HepG2 (cell line): ENCODE measurements at regions of chr17 and their contacts with region 1.

Region 1: GRCh38 chr17:42536048-42536371 is at the start of gene NAGLU:
- DNase-seq: peak; percentile 89
- ATAC-seq: peak; percentile 74
- H3K4me3 ChIP-seq: peak within 1 kb of the TSS; percentile 54 to 72 (median 66)
- H3K27ac ChIP-seq: peak within 1 kb of the TSS; percentile 79
- H3K4me1 ChIP-seq: peaks cover 62% of the 10 kb centered on the region
- H3K27me3 ChIP-seq: no peaks in the 10 kb centered on the region
- CTCF ChIP-seq: no peak
- EP300 ChIP-seq: peak in 1 of 2 experiments; percentile 32; a peak in 1 of 4 replicates
- POLR2A ChIP-seq: peak; percentile 55 to 86
- RAD21 ChIP-seq: no peak
- total RNA-seq, gene NAGLU: 13.1 and 40.1 TPM in 2 replicates

Region 2: GRCh38 chr17:42312285-42313130 is 223.5 kb before region 1 on chr17:
- CTCF ChIA-PET with region 1: no interaction called
- POLR2A ChIA-PET with region 1: interaction called, 11 read pairs
- in situ Hi-C with region 1: no loop called
- intact Hi-C with region 1: no loop called
- DNase-seq: peak; percentile 80
- ATAC-seq: peak; percentile 83
- H3K4me3 ChIP-seq: peak overlapping the region; percentile 47 to 65 (median 51)
- H3K27ac ChIP-seq: peak overlapping the region; percentile 73
- H3K4me1 ChIP-seq: peaks cover 90% of the 10 kb centered on the region
- H3K27me3 ChIP-seq: no peaks in the 10 kb centered on the region
- CTCF ChIP-seq: peak; percentile 96
- EP300 ChIP-seq: peak in 1 of 2 experiments; percentile 13; a peak in 1 of 4 replicates
- POLR2A ChIP-seq: peak in 1 of 2 experiments; percentile 56; a peak in 1 of 4 replicates
- RAD21 ChIP-seq: peak; percentile 92

Region 3: DNA sequence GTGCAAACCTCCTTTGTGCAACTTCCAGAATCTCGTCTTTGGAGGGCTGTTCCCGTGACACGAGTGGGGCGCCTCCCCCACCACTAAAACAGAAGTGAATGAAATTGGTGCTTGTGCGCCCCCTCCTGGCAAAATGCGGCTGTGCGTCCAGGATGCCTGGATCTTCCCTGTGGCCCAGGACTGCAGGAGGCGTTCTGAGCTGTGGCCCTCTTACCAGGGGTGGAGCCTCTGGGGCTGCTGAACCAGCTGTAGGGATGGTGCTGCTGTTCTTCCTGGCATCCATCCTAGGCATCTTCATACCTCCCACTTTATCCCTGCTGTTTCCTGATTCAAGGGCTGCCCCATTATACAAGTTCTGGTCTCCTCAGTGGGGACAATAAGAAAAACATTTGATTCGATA is 18.5 kb before region 1 on chr17:
- CTCF ChIA-PET with region 1: interaction called, 8 read pairs
- POLR2A ChIA-PET with region 1: interaction called, 52 read pairs
- in situ Hi-C with region 1: no loop called
- intact Hi-C with region 1: no loop called
- DNase-seq: peak; percentile 80
- ATAC-seq: peak; percentile 77
- H3K4me3 ChIP-seq: no peak overlapping the region
- H3K27ac ChIP-seq: no peak overlapping the region
- H3K4me1 ChIP-seq: peaks cover 53% of the 10 kb centered on the region
- H3K27me3 ChIP-seq: no peaks in the 10 kb centered on the region
- CTCF ChIP-seq: peak; percentile 98
- EP300 ChIP-seq: no peak
- POLR2A ChIP-seq: no peak
- RAD21 ChIP-seq: peak; percentile 89

Region 4: GRCh38 chr17:42554250-42555121 is 18.5 kb after region 1 on chr17:
- CTCF ChIA-PET with region 1: no interaction called
- POLR2A ChIA-PET with region 1: interaction called, 68 read pairs
- in situ Hi-C with region 1: no loop called
- intact Hi-C with region 1: no loop called
- DNase-seq: peak; percentile 86
- ATAC-seq: peak; percentile 81
- H3K4me3 ChIP-seq: peak overlapping the region; percentile 88 to 100 (median 94)
- H3K27ac ChIP-seq: peak overlapping the region; percentile 87
- H3K4me1 ChIP-seq: peaks cover 52% of the 10 kb centered on the region
- H3K27me3 ChIP-seq: no peaks in the 10 kb centered on the region; a peak in 1 of 5 replicates
- CTCF ChIP-seq: peak; percentile 32
- EP300 ChIP-seq: peak in 1 of 2 experiments; percentile 39; a peak in 1 of 4 replicates
- POLR2A ChIP-seq: peak; percentile 81 to 92
- RAD21 ChIP-seq: peak; percentile 46; the same call in 1 of the 2 replicates

Region 5: GRCh38 chr17:42577532-42578281 is 41.7 kb after region 1 on chr17 and contains the start of gene PSMC3IP:
- CTCF ChIA-PET with region 1: no interaction called
- POLR2A ChIA-PET with region 1: interaction called, 20 read pairs
- in situ Hi-C with region 1: no loop called
- intact Hi-C with region 1: no loop called
- DNase-seq: peak; percentile 92
- ATAC-seq: peak; percentile 90
- H3K4me3 ChIP-seq: peak within 1 kb of the TSS; percentile 75 to 97 (median 87)
- H3K27ac ChIP-seq: peak within 1 kb of the TSS; percentile 90
- H3K4me1 ChIP-seq: peaks cover 33% of the 10 kb centered on the region
- H3K27me3 ChIP-seq: no peaks in the 10 kb centered on the region; a peak in 1 of 5 replicates
- CTCF ChIP-seq: peak; percentile 84
- EP300 ChIP-seq: 0 out of 4 replicates have a peak, but pooled peaks of 1 of the 2 experiments have one; percentile 24
- POLR2A ChIP-seq: peak; percentile 90 to 94
- RAD21 ChIP-seq: peak; percentile 59; the same call in 1 of the 2 replicates
- total RNA-seq, gene PSMC3IP: 20.1 and 22.4 TPM in 2 replicates

Region 6: DNA sequence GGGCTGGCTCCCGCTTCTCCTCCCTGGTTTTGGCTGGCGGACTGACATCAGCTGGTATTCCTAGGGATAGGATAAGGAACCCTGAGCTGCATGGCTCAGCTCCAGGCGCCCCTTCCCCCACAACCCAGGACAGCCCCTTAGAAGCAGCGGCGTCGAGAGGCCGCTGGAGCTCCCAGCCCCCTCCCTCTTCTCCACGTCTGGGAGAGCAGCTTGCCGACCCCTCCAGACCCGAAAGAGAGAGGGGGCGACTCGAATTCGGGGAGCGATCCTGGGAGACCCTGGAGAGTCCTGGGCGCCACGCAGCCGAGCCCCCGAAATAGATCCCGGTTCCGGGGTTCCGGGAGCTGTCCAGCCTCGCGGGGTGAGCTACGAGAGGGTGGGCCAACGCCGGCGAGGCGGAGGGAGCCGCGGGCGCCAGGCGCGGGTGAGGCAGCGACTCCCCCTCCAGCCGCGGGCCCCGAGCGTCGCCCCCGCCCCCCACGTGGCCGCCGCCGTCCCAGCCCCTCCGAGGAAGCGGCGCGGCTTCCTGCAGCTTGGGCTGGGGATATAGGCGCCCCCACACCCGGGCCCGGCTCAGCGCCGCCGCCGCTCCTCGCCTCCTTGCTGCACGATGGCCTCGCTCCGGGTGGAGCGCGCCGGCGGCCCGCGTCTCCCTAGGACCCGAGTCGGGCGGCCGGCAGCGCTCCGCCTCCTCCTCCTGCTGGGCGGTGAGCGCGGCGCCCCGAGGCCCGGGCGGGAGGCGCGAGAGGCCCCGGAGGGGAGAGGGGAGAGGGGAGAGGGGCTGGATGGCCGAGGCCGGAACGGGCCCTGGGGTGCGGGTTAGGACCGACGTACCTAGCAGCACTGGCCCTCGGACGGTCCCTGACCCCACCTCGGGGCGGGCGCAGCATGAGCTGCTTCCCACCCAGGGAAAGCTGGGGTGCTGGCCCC is 224.9 kb after region 1 on chr17 and contains the start of gene RAMP2:
- CTCF ChIA-PET with region 1: no interaction called
- POLR2A ChIA-PET with region 1: no interaction called
- in situ Hi-C with region 1: no loop called
- intact Hi-C with region 1: no loop called
- DNase-seq: no peak
- ATAC-seq: peak; percentile 58
- H3K4me3 ChIP-seq: peak within 1 kb of the TSS; percentile 53 to 75 (median 59)
- H3K27ac ChIP-seq: no peak within 1 kb of the TSS
- H3K4me1 ChIP-seq: peaks cover 53% of the 10 kb centered on the region
- H3K27me3 ChIP-seq: peaks cover 0 to 12% of the 10 kb centered on the region in 2 experiments; a peak in 2 of 5 replicates
- CTCF ChIP-seq: peak; percentile 1; the same call in 1 of the 2 replicates
- EP300 ChIP-seq: no peak
- POLR2A ChIP-seq: no peak
- RAD21 ChIP-seq: no peak
- total RNA-seq, gene RAMP2: 0.74 and 1.4 TPM in 2 replicates